Left cardiac atrium (tissue), 4 donors: ENCODE measurements at regions of chr1 and their contacts with region 1.

Region 1: GRCh38 chr1:168082008-168082876 is 54.5 kb downstream of the GPR161 start:
- DNase-seq: peak; percentile 73
- ATAC-seq: peak; percentile 51 to 69

Region 2: DNA sequence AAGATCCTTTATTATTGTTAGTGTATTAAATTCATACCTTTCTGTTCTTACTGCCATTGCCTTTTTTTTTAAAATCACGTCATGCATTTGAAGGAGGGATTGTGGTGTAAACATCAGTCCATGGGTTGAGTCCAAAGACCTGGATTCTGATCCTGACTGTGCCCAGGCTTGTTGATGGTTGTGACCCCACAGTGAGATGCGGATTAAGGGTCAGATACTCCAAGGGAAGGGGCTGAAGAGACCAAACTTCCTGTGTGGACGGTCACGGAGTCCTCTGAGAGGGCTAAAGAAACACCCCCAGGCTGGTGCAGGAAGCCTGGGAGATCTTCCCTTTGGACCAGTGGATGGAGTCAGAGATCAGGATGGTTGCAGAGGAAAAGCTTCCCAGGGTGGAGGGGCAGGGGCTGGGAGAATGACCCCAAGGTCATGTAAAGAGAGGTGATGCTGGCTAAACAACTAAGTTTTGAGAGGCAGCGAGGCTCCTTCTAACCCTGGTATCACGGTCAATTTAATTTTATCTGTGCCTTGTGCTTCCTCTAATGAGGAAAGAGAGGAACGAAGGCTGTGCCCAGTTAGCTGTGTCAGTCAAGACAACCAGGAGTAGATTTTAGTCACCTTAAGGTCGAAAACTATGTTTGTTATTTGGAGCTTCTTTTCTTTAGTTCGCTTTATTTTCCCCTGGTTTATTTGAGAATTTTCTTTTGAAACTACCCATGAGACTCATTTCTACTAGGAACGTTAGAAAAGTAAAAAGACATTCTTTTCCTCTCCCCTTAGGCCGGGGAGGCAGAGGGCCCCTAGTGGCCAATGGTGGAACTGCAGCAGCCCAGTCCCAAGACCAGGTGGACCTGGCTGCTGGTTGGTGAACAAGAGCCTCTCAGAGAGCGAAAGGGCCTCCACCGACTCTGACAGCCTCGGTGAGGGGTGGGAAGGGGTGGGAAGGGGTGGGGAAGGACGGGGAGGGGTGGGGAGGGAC is 63.2 kb after region 1 on chr1:
- intact Hi-C with region 1: loop called in 1 of 2 experiments (anchors 10 kb)
- DNase-seq: peak; percentile 88
- ATAC-seq: peak; percentile 96 to 97